CD4-positive, alpha-beta memory T cell (primary cell): ENCODE measurements at regions of chr6 and their contacts with region 1.

Region 1: DNA sequence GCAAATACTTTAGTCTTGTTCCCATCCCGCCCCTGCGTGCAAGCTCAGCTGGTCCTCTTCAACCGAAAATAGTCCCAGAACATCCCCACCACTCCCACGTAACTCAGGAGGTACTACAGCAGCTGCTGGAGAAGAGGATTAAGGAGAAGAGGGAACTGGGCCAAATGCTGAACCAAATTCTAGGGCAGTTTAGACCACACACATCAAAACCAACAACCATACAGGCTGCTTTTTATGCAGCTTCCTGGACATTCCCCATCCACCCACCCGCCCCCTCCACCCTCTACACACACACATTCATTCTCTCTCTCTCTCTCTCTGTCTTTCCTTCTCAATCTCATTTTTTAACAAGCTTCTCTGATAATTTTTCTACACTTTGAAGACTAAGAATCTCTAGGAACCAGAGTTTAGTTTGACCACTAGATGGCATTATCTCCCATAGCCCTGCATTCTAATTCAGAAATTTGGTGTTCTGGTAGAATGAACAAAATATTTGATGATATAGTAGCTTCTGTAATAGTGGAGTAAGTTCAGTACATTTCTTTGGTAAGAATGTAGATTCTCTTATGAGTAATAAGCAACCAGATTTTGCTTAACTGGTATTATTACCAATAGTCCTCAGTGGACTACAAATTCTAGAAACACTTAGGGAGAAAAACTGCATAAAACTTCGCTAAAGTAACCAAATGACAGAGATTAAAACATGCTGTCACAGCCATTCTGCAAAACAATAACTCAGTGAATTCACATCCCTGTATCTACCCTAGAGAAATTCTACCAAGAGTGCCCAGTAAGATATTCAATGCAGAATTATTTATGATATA is 52.1 kb upstream of the BEND6 start:
- DNase-seq: peak in 4 of 5 donors; percentile 14 to 33 (median 20)
- H3K4me3 ChIP-seq: no peak overlapping the region
- H3K4me3 Mint-ChIP-seq: peak overlapping the region in 1 of 8 donors; percentile 18
- H3K27ac ChIP-seq: no peak overlapping the region
- H3K27ac Mint-ChIP-seq: peak overlapping the region in 1 of 7 donors; percentile 63
- H3K4me1 ChIP-seq: no peaks in the 10 kb centered on the region
- H3K4me1 Mint-ChIP-seq: peaks cover 0 to 3% (median 0%) of the 10 kb centered on the region in 4 donors
- H3K27me3 ChIP-seq: no peaks in the 10 kb centered on the region
- H3K27me3 Mint-ChIP-seq: peaks cover 1 to 5% of the 10 kb centered on the region in 2 donors

Region 2: GRCh38 chr6:56863366-56863765 is 39.5 kb before region 1 on chr6:
- CTCF ChIA-PET with region 1: interaction called, 10 read pairs
- POLR2A ChIA-PET with region 1: no interaction called
- intact Hi-C with region 1: no loop called
- DNase-seq: no peak
- H3K4me3 ChIP-seq: no peak overlapping the region
- H3K4me3 Mint-ChIP-seq: no peak overlapping the region
- H3K27ac ChIP-seq: no peak overlapping the region
- H3K27ac Mint-ChIP-seq: no peak overlapping the region
- H3K4me1 ChIP-seq: no peaks in the 10 kb centered on the region
- H3K4me1 Mint-ChIP-seq: peaks cover 0 to 6% (median 1%) of the 10 kb centered on the region in 4 donors
- H3K27me3 ChIP-seq: no peaks in the 10 kb centered on the region
- H3K27me3 Mint-ChIP-seq: peaks cover 4 to 6% of the 10 kb centered on the region in 2 donors

Region 3: DNA sequence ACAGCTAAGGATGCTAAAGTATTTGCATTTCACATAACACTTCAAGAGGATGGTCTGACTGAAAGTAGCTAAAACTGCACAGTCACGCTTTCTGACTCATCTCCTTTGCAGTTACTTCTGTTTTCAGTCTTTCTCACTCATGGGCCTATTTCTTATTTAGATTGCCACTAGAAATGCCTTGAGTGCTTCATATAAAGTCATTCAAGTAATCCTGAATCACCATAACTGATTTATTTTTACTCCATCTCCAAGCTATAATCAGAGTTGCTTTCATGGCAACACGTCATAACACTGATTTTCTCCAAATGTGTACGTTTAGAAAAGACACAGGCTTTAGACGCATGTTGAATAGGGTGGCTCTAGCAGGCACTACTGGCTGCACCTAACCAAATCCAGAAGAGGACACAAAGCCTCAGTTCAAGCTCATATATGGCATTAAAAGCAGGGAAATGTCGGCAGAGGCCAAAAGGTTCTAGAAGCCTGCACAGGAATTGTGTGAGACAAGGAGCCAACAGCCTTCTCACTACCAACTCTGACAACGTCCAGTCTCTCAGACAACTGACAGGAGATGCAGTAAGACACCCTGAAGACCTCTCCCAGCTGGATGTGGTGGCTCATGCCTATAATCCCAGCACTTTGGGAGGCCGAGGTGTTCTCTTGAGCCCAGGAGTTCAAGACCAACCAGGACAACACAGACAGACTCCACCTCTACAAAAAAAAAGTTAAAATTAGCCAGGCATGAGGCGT is 12.0 kb before region 1 on chr6:
- CTCF ChIA-PET with region 1: interaction called, 55 read pairs
- POLR2A ChIA-PET with region 1: no interaction called
- intact Hi-C with region 1: no loop called
- DNase-seq: no peak
- H3K4me3 ChIP-seq: no peak overlapping the region
- H3K4me3 Mint-ChIP-seq: no peak overlapping the region
- H3K27ac ChIP-seq: no peak overlapping the region
- H3K27ac Mint-ChIP-seq: peak overlapping the region in 1 of 7 donors; percentile 53
- H3K4me1 ChIP-seq: peaks cover 24% of the 10 kb centered on the region
- H3K4me1 Mint-ChIP-seq: peaks cover 11 to 20% (median 15%) of the 10 kb centered on the region in 4 donors
- H3K27me3 ChIP-seq: no peaks in the 10 kb centered on the region
- H3K27me3 Mint-ChIP-seq: no peaks in the 10 kb centered on the region

Region 4: DNA sequence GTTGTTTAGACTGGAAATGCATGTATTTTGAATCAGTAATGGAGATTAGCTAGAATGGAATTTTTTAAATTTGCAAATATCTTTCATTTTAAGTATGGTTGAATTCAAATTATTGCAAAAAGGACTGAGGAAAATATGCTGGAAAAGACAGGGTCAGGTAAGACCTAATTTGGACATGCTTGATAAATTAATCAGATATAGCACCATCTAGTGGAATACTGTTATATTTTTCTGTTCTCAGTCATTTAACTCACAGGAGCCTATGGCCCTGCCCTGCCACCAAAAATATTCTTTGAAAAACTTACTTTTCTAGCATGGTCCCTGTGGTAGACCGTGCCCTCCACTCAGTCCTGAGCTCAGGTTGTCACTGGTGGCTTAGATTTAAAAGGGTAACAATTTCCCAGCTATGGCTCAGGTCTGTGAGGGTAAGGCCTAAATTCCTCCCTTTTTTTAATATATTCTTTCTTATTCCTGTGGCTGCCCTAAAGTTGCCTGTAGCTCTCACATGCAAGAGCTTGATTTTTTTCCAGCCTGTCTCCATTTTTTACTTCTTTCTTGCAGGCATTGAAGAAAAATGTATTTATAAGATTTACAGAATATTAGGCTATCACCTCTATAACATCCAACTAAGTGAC is 118.3 kb after region 1 on chr6:
- CTCF ChIA-PET with region 1: interaction called, 7 read pairs
- POLR2A ChIA-PET with region 1: no interaction called
- intact Hi-C with region 1: loop called (anchors 1 kb)
- DNase-seq: peak in 4 of 5 donors; percentile 9 to 22 (median 12)
- H3K4me3 ChIP-seq: no peak overlapping the region
- H3K4me3 Mint-ChIP-seq: no peak overlapping the region
- H3K27ac ChIP-seq: no peak overlapping the region
- H3K27ac Mint-ChIP-seq: no peak overlapping the region
- H3K4me1 ChIP-seq: no peaks in the 10 kb centered on the region
- H3K4me1 Mint-ChIP-seq: no peaks in the 10 kb centered on the region
- H3K27me3 ChIP-seq: peaks cover 3% of the 10 kb centered on the region
- H3K27me3 Mint-ChIP-seq: peaks cover 6 to 9% of the 10 kb centered on the region in 2 donors

Region 5: DNA sequence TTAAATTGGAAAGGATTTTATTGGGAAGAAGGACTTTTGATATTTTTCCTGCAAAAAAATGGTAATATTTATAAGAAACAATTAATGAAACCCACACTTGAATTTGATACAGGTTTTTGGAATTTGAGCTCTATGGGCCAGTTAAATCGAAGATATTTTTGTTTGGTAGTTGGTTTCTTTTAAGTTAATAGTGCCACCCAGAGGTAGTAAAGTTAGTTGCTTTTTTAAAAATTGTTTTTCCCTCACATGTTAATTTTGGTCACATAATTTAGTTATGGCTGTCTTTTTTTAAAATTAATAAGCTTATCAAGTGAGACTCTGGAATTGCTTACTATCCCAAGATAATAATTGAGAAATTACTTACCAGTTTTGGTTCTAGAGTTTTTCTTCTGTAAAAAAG is 421.7 kb after region 1 on chr6:
- CTCF ChIA-PET with region 1: interaction called, 333 read pairs
- POLR2A ChIA-PET with region 1: no interaction called
- intact Hi-C with region 1: loop called (anchors 2 kb)
- DNase-seq: peak in 3 of 5 donors; percentile 14 to 23 (median 14)
- H3K4me3 ChIP-seq: no peak overlapping the region
- H3K4me3 Mint-ChIP-seq: no peak overlapping the region
- H3K27ac ChIP-seq: no peak overlapping the region
- H3K27ac Mint-ChIP-seq: no peak overlapping the region
- H3K4me1 ChIP-seq: no peaks in the 10 kb centered on the region
- H3K4me1 Mint-ChIP-seq: peaks cover 3 to 23% (median 13%) of the 10 kb centered on the region in 4 donors
- H3K27me3 ChIP-seq: no peaks in the 10 kb centered on the region
- H3K27me3 Mint-ChIP-seq: no peaks in the 10 kb centered on the region